ENCODE measurements at regions of chr15 and their contacts with region 1.

Region 1: DNA sequence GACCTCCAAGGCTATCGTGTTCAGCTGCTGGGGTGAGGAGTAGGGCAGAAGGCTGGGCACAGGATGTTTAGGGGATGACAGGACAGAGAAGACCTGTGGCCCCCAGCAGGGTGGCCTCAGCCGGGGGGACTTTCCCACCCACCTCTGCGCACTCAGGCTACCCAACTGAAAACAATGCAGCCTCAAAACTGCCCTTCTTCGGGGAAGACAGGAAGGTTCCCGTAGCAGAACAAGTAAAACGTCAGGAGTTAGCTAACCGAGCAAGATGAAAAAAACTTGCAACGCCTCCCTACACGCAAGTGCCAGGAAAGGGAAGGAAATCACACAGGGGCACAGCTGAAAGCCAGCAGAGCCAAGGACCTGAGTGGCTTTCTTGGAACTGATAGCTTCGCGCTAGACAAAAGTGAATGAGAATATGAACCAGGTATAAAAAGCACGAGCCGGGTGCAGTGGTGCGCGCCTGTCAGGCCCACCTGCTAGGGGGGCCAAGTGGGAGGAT is 38.4 kb upstream of the FURIN start:
- DNase-seq: peak; percentile 56
- H3K4me3 Mint-ChIP-seq: peak overlapping the region; percentile 68
- H3K27ac Mint-ChIP-seq: peak overlapping the region; percentile 97
- H3K4me1 Mint-ChIP-seq: peaks cover 66% of the 10 kb centered on the region
- H3K27me3 Mint-ChIP-seq: no peaks in the 10 kb centered on the region

Region 2: DNA sequence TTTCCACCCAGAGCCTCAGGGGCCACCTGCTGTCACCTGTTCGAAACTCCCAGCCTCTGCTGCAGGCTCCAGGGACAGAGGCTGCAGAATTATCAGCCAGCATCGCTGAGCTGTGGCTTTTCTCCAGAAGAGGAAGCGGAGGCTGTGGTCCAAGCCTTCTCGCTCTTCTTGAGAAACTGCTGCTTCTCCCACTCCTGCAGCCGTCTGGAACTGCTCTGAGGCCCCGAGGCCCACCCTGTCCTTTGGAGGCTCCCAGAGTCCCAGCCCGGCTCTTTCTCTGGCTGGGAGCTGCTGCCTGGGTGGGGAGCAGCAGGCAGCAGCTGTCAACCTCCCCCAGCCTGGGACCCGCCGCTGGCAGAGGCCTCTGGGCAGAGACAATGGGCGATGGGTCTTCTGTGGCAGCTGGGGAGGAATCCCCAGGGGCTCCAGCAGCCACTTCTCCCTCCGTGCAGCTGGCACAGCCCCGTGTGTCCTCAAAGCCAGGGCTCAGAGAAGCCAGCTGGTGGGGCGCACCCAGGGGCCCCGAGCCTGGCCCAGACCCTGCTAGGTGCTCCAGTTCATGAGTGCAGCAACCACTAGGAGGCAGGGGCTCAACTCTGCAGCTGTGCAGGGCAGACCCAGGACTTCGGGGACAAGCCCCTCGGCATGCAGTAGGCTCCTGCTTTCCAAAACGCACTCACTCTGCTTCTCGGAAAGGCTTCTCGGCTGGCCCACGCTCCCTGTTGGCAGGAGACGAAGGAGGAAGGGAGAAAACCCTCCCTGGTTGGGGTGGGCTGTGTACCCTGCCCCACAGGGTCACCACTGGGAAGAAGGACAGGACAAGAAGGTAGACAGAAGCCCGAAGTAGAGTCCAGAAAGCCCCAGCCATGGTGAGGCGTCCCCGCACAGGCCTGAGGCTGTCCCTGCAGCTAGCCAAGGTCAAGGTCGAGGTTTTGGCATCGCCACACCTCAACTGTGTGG is 11.5 kb before region 1 on chr15:
- CTCF ChIA-PET with region 1: interaction called, 32 read pairs
- POLR2A ChIA-PET with region 1: interaction called, 6 read pairs
- DNase-seq: peak; percentile 36
- H3K4me3 Mint-ChIP-seq: peak overlapping the region; percentile 27
- H3K27ac Mint-ChIP-seq: peak overlapping the region; percentile 84
- H3K4me1 Mint-ChIP-seq: peaks cover 71% of the 10 kb centered on the region
- H3K27me3 Mint-ChIP-seq: no peaks in the 10 kb centered on the region

Region 3: GRCh38 chr15:90845201-90845949 is 15.4 kb after region 1 on chr15:
- CTCF ChIA-PET with region 1: interaction called, 11 read pairs
- POLR2A ChIA-PET with region 1: interaction called, 3 read pairs
- DNase-seq: peak; percentile 36
- H3K4me3 Mint-ChIP-seq: no peak overlapping the region
- H3K27ac Mint-ChIP-seq: peak overlapping the region; percentile 66
- H3K4me1 Mint-ChIP-seq: peaks cover 49% of the 10 kb centered on the region
- H3K27me3 Mint-ChIP-seq: no peaks in the 10 kb centered on the region

Measured in activated CD4-positive, alpha-beta T cell treated with anti-CD3 and anti-CD28 coated beads, Interleukin-2, amount 10 ng/mL, durations not matched to agents 7 days and 5 days (primary cell).